AG04450 (cell line): ENCODE measurements at regions of chr2 and their contacts with region 1.

Region 1: DNA sequence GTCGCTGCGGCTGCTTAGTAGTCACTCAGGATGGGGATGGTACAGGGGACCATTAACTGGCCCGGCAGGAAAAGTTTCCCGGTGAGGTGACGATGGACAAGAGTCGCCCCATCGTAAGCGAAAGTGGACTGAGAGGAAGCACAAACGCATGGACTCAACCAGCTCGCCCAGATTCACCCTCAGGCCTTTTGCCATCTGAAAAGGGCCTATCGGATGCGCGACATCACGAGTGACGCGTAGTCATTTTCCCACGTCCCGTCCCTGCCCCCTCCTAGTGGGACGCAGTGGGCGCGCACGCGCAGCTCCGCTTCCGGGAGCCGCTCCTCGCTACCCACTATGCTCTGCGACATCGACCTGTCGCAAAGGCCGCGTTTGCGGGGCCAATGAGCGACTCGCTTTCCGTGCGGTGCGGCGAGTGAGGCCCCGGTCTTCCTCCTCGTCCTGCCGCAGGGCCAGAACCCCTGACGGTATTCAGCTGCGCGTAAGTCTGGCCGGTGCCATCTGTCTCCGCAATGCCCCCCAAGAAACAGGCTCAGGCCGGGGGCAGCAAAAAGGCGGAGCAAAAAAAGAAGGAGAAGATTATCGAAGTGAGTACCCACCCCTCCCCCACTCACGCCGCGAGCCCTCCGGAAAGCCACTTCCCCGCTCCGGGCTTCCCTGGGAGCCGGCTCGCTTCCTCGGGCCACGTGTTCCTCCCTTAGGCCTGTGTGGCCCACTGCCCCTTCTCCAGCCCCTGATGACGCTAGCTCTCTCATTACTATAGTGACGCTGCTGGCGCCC is at the start of gene ZC3H15:
- DNase-seq: peak; percentile 93
- H3K4me3 ChIP-seq: peak within 1 kb of the TSS; percentile 74
- H3K27ac ChIP-seq: peak within 1 kb of the TSS; percentile 95
- H3K27me3 ChIP-seq: no peaks in the 10 kb centered on the region
- CTCF ChIP-seq: no peak
- polyA plus RNA-seq, gene ZC3H15: 70.6 and 107 TPM in 2 replicates

Region 2: DNA sequence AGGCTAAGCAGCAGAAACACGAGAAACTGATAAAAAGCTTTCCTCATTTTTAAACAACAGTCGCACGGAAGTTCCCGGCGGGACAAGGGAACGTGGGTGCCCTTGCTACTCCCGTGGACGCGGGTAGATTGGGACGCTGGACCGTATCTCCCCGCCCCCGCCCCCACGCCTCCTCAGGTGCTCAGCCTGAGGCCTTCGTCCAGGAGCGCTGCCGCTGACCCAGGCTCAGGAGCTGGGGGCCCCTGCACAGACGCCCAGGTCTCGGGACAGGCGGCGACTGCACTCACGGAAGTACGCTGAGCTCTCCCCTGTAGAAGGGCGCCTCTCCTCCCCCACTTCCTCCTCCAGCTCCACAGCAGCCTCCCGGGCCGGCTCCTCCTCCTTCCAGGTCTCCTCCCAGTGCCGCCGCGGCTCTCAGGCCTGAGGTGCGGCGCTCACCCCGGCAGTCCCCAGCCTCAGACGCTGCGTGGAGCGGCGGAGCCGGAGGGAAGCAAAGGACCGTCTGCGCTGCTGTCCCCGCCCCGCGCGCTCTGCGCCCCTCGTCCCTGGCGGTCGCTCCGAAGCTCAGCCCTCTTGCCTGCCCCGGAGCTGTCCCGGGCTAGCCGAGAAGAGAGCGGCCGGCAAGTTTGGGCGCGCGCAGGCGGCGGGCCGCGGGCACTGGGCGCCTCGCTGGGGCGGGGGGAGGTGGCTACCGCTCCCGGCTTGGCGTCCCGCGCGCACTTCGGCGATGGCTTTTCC is 103.7 kb after region 1 on chr2 and contains the start of gene ITGAV:
- CTCF ChIA-PET with region 1: no interaction called
- POLR2A ChIA-PET with region 1: interaction called, 11 read pairs
- DNase-seq: peak; percentile 62
- H3K4me3 ChIP-seq: peak within 1 kb of the TSS; percentile 90
- H3K27ac ChIP-seq: peak within 1 kb of the TSS; percentile 86
- H3K27me3 ChIP-seq: no peaks in the 10 kb centered on the region
- CTCF ChIP-seq: no peak
- polyA plus RNA-seq, gene ITGAV: 106 and 129 TPM in 2 replicates

Region 3: GRCh38 chr2:186862869-186863709 is 377.0 kb after region 1 on chr2:
- CTCF ChIA-PET with region 1: no interaction called
- POLR2A ChIA-PET with region 1: no interaction called
- DNase-seq: no peak
- H3K4me3 ChIP-seq: no peak overlapping the region
- H3K27ac ChIP-seq: no peak overlapping the region
- H3K27me3 ChIP-seq: no peaks in the 10 kb centered on the region
- CTCF ChIP-seq: peak; percentile 73